ENCODE measurements at regions of chr10 and their contacts with region 1.

Region 1: GRCh38 chr10:96626795-96627194 is 40.0 kb upstream of the TM9SF3 start:
- DNase-seq: no peak
- ATAC-seq: peak; percentile 63
- H3K4me3 ChIP-seq: no peak overlapping the region
- H3K27ac ChIP-seq: no peak overlapping the region
- H3K4me1 ChIP-seq: no peaks in the 10 kb centered on the region
- H3K27me3 ChIP-seq: no peaks in the 10 kb centered on the region
- CTCF ChIP-seq: peak in 2 of 3 experiments; percentile 9 to 27; a peak in 1 of 6 replicates
- EP300 ChIP-seq: no peak
- POLR2A ChIP-seq: no peak
- RAD21 ChIP-seq: no peak

Region 2: GRCh38 chr10:96596422-96597407 is 30.1 kb before region 1 on chr10:
- CTCF ChIA-PET with region 1: no interaction called
- POLR2A ChIA-PET with region 1: no interaction called
- RAD21 ChIA-PET with region 1: no interaction called
- SMC1A ChIA-PET with region 1: no interaction called
- in situ Hi-C with region 1: no loop called
- intact Hi-C with region 1: no loop called
- DNase-seq: no peak
- ATAC-seq: no peak
- H3K4me3 ChIP-seq: no peak overlapping the region
- H3K27ac ChIP-seq: no peak overlapping the region
- H3K4me1 ChIP-seq: no peaks in the 10 kb centered on the region
- H3K27me3 ChIP-seq: no peaks in the 10 kb centered on the region
- CTCF ChIP-seq: no peak
- EP300 ChIP-seq: no peak
- POLR2A ChIP-seq: no peak
- RAD21 ChIP-seq: no peak

Region 3: DNA sequence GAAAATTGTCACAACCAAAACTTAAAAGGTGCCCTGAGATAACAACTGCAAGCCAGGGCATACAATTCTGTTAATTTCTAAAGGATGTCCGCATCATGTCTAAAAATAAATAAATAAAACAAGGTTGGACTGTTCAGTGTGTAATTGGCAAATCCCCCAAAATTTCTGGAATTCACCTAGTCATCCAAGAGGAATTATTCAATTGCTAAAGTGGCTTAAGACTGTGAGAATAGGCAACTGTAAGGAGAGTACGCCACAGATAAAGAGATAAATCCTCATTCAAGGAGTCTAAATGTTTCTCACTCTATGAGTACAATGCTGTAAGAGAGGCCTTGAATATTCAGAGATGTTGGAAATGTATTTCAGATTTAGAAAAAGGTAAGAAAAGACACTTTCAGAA is 56.3 kb after region 1 on chr10:
- CTCF ChIA-PET with region 1: no interaction called
- POLR2A ChIA-PET with region 1: interaction called, 11 read pairs
- RAD21 ChIA-PET with region 1: no interaction called
- SMC1A ChIA-PET with region 1: no interaction called
- in situ Hi-C with region 1: no loop called
- intact Hi-C with region 1: no loop called
- DNase-seq: no peak
- ATAC-seq: no peak
- H3K4me3 ChIP-seq: no peak overlapping the region
- H3K27ac ChIP-seq: no peak overlapping the region
- H3K4me1 ChIP-seq: peaks cover 38% of the 10 kb centered on the region
- H3K27me3 ChIP-seq: no peaks in the 10 kb centered on the region
- CTCF ChIP-seq: no peak
- EP300 ChIP-seq: no peak
- POLR2A ChIP-seq: no peak
- RAD21 ChIP-seq: no peak

Measured in GM12878 (cell line).